ENCODE measurements at regions of chr7 and their contacts with region 1.

Region 1: DNA sequence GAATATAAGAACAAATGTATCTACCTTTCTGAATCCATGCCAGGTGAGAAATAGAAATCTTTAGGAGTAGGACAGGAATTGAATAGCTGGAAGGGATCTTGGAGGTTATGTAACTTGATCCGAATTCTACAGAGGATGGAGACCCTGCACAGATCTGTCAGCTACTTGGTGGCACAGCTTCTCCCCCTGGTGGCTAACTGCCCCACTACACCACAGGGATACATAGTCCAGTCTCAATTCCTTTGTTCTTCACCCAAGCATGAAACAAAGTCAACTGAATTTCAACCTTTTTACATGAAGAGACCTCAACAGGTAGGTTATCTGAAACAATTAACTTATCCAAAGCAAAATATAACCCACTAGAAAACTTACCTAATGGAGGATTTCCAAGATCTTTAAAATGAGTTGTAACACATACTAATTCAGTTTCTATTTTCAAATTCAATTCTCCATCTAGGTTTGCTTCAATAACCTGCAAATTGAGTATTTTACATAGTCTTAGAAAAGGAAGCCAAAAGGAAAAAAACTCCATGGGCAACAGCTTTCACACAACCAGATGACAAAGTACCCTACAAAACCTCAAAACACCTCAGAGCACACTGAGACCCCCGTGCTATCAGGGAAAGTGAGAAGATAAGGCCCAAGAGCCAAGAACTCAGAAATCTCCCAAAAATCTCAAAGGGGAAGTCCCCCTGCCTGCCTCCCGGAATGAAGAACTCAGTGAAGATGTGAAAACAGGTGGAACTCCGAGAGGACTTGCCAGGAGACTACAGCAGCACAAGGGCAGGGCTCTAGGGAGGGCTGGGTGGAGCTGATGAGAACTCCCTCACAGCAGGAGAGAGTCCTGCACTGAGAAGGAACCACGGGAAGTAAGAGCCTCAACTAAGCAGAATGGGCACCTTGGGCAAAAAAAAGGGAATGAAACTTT is 10.3 kb downstream of the HUS1 start:
- DNase-seq: peak; percentile 66
- H3K4me3 ChIP-seq: no peak overlapping the region
- H3K27ac ChIP-seq: no peak overlapping the region
- H3K4me1 ChIP-seq: peaks cover 4% of the 10 kb centered on the region
- CTCF ChIP-seq: peak; percentile 99

Region 2: DNA sequence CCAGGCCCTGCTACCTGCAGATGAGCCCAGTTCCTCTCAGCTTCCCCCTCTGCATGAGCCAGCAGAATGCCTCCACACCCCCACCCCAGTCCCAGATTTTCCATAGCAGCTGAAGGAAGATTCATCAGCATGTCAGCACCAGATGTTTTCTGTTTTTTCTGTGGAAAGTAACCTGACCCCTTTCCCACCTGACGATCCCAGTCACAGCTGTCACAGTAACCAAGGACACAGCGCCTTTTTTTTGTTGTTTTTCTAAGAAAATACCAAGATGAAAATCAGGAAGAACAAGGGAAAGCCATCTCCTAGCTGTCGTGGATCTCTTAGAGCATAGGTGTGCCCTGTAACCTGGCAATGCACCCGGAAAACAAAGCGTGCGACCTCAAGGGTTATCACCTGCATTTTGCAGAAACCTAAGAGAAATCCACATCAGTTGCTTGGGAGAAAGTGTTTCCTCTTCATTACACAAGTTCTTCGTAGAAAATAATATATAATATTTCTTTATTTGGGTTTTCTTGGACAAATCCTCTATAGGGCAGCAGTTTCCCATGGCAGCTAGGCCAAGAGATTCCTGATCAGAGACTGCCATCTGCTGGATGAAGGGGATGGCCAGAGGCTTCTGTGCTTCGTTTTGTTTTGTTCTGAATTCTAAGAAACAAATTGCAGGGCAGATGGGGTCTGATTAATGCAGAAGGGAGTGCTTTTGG is 789.1 kb before region 1 on chr7:
- CTCF ChIA-PET with region 1: no interaction called
- POLR2A ChIA-PET with region 1: no interaction called
- intact Hi-C with region 1: no loop called
- DNase-seq: peak; percentile 85
- H3K4me3 ChIP-seq: peak overlapping the region; percentile 23
- H3K27ac ChIP-seq: peak overlapping the region; percentile 8
- H3K4me1 ChIP-seq: peaks cover 55% of the 10 kb centered on the region
- CTCF ChIP-seq: peak; percentile 98

Region 3: GRCh38 chr7:47852330-47853245 is 116.5 kb before region 1 on chr7:
- CTCF ChIA-PET with region 1: no interaction called
- POLR2A ChIA-PET with region 1: no interaction called
- intact Hi-C with region 1: loop called (anchors 1 kb)
- DNase-seq: peak; percentile 24
- H3K4me3 ChIP-seq: no peak overlapping the region
- H3K27ac ChIP-seq: no peak overlapping the region
- H3K4me1 ChIP-seq: no peaks in the 10 kb centered on the region
- CTCF ChIP-seq: peak; percentile 67

Region 4: DNA sequence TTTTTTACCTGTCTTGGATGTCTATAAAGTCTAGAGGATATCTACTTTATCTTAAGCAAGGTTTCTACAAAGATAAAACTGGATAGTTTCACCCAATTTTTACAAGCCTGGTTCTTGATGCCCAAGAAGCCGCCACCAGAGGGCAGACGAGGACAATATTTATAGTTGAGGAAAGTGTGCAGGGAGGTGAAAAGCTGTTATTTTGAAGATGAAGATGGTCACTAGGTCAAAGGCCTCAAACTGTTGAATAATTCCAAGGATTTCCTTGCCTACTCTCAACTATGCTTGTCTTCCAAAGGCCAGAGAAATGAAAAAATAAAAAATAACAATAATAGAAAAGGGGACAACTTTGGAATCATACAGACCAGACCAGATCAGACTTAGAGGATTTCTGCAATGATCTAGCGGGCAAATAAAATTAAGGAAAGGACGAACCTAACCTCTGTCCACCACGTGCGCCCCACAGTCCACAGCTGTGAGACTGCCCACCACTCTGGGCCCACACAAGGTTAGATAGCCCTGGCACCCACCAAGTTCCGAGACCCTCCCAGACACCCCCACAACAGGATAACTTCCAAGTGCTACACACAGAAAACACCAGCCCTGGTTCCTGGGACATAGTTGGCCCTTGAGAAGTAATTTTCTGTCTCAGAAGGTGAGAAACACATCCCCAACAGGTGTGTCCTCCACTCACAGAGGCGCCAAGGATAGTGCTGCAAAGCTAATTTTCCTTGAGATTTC is 23.7 kb before region 1 on chr7:
- CTCF ChIA-PET with region 1: interaction called, 6 read pairs
- POLR2A ChIA-PET with region 1: interaction called, 3 read pairs
- intact Hi-C with region 1: loop called (anchors 1 kb)
- DNase-seq: peak; percentile 81
- H3K4me3 ChIP-seq: no peak overlapping the region
- H3K27ac ChIP-seq: no peak overlapping the region
- H3K4me1 ChIP-seq: no peaks in the 10 kb centered on the region
- CTCF ChIP-seq: peak; percentile 97

Measured in OCI-LY7 (cell line).